Right ventricle myocardium superior (tissue), 1 donor: ENCODE measurements at regions of chr1 and their contacts with region 1.

Region 1: DNA sequence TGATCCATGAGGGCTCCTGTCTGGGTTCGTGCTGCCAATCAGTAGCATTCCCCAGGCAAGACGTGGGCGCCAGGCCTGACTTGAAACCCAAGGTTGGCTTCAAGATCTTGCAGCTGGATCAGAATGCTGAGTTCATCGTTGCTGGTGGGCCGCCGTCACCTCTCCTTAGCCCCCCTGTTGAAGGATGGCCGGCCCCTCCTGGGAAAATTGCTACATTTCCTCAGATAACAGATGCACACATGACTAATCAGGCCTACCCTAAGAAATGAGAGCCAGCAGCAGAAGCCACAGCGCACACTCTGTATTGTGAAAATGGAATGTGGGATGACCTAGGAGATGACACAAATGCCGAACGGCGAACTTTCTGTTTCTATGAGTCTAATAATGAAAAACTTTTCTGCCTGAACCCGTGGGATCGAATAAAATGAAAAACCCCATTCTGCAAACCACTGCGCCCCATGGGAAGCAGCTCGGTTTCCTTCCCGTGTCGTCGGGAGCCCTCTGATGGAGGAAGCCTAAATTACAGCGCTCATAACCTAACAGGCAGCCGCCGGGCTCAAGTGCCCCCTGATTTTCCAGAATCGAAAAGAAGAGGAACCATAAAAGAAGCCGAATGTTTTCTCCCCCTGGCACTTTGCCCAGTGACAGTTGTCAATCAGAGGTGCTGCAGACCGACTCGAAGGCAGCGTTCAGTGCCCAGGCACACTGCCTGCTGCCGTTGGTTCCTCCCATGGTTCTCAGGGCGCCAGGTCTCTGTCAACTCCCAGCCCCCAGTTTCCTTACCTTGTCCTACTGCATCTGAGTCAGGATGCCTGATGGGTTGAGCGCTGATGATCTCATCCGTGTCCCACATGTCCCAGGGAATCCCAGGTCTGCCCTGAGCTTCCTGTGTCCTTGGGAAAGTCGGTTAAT is 38.2 kb upstream of the H6PD start:
- DNase-seq: peak; percentile 74
- ATAC-seq: peak; percentile 82

Region 2: DNA sequence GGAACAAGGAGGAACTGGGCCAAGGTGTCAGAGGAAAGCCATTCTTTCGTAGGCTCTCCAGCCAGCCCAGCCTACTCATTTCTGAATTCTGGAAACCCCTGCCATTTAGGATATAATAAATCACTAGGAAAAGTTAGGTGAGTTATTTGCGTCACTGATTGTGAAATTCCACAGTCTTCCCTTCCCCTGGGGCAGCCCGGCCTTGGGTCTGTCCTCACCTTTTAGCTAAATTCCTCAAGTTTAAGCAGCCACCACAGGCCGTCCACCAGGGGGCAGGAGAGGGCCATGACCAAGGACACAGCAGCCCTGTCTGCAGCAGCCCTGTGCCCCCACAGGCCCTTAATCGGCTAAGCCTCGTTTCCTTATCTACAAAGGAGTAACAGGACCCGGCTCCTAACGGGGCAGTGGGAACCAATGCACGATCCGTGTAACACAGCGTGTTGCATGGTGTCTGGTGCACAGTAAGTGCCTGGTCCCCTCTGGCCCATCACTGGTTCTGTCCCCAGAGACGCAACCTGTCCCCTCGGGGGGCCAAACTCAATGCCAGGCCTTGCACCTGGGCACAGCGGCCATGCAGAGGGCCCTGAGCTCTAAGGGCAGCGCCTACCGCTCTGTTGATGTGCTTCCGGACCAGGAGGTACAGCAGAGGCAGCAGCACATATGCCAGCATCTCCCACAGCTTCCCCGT is 85.6 kb before region 1 on chr1:
- intact Hi-C with region 1: loop called (anchors 2 kb)
- DNase-seq: peak; percentile 95
- ATAC-seq: peak; percentile 73

Region 3: DNA sequence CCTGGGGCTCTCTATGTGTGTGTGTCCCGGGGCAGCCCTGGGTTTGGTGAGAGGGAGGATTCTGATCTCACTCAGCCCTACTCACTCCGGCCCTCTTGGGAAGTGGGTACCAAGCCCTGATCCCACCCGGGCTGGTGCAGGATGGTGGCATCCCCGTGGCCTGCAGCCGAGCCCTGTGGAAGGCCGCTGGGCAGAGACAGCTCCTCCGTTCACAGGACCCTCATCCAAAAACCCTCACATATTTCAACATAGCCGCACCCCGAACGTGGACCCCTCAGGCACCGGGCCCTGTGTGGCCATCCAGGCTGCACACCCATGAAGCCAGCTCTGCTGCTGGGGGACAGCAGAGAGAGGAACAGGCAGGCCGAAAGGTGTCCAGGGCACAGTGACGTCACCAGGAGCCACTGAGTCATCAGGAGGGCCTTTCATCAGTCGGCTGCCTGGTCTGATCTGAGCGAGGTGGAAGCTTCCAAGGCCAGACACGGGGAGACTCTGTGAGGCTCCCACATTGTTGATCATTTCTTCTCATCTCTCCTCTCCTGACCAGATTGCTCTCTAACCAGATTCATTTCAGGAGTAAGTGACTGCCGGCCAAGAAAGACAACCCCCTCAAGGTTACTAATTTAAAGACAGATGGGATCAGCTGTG is 51.2 kb before region 1 on chr1:
- intact Hi-C with region 1: loop called (anchors 10 kb)
- DNase-seq: no peak
- ATAC-seq: no peak